ENCODE measurements at regions of chr2 and their contacts with region 1.

Region 1: DNA sequence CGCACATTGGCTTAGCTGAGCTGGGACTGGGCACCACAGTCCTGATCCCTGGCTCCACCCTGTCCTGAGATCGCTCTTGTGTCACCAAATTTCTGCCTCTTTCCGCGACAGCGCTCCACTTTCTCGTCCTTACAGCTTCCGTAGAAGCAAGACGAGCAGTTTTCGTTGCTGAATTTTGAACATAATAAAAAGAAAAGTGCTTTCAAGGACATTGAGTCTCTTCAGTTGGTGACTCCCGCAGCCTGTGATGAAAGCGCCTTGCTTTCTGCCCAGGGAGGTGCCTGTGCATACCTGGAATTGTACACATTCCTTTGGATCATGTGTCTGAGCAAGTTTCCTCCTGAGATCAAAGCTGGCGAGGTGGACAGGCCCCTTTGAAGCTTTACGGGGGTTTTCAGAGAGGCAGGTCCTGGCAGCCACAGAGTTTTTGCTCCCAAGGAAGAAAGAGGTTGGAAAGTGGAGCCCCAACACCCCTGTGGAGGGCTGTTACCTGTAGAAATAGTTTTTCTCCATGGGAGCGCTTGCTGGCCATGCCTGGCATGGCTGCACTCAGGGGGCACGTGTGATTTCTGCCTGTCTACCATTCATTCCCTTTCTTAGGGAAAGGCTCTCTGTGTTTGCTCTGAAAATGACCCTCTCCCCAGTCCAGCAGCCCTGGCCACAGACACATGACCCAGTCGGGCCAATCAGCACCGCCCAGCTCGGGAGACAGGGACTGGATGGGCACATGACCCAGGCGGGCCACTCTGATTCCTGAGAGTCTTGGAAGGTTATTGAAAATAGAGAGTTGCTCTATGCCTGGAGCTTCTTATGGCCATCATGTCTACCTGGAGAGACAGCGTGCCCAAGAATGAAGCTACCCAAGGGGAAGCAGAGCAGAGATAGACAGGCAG is 115.6 kb upstream of the OTOS start:
- DNase-seq: peak; percentile 88 to 91
- H3K4me3 ChIP-seq: peak overlapping the region; percentile 41
- H3K4me3 Mint-ChIP-seq: peak overlapping the region; percentile 94
- H3K27ac Mint-ChIP-seq: peak overlapping the region; percentile 99
- H3K4me1 ChIP-seq: peaks cover 48% of the 10 kb centered on the region
- H3K4me1 Mint-ChIP-seq: peaks cover 7% of the 10 kb centered on the region
- H3K27me3 ChIP-seq: no peaks in the 10 kb centered on the region
- H3K27me3 Mint-ChIP-seq: no peaks in the 10 kb centered on the region
- CTCF ChIP-seq: no peak

Region 2: GRCh38 chr2:240160291-240161086 is 95.6 kb before region 1 on chr2:
- CTCF ChIA-PET with region 1: no interaction called
- POLR2A ChIA-PET with region 1: no interaction called
- intact Hi-C with region 1: no loop called
- DNase-seq: no peak
- H3K4me3 ChIP-seq: no peak overlapping the region
- H3K4me3 Mint-ChIP-seq: no peak overlapping the region
- H3K27ac Mint-ChIP-seq: no peak overlapping the region
- H3K4me1 ChIP-seq: no peaks in the 10 kb centered on the region
- H3K4me1 Mint-ChIP-seq: no peaks in the 10 kb centered on the region
- H3K27me3 ChIP-seq: no peaks in the 10 kb centered on the region
- H3K27me3 Mint-ChIP-seq: peaks cover 9% of the 10 kb centered on the region
- CTCF ChIP-seq: no peak

Region 3: GRCh38 chr2:240369801-240370585 is 113.9 kb after region 1 on chr2:
- CTCF ChIA-PET with region 1: no interaction called
- POLR2A ChIA-PET with region 1: interaction called, 3 read pairs
- intact Hi-C with region 1: loop called (anchors 1 kb)
- DNase-seq: peak; percentile 73 to 87
- H3K4me3 ChIP-seq: no peak overlapping the region
- H3K4me3 Mint-ChIP-seq: no peak overlapping the region
- H3K27ac Mint-ChIP-seq: peak overlapping the region; percentile 36
- H3K4me1 ChIP-seq: peaks cover 30% of the 10 kb centered on the region
- H3K4me1 Mint-ChIP-seq: no peaks in the 10 kb centered on the region
- H3K27me3 ChIP-seq: no peaks in the 10 kb centered on the region
- H3K27me3 Mint-ChIP-seq: no peaks in the 10 kb centered on the region
- CTCF ChIP-seq: no peak

Region 4: DNA sequence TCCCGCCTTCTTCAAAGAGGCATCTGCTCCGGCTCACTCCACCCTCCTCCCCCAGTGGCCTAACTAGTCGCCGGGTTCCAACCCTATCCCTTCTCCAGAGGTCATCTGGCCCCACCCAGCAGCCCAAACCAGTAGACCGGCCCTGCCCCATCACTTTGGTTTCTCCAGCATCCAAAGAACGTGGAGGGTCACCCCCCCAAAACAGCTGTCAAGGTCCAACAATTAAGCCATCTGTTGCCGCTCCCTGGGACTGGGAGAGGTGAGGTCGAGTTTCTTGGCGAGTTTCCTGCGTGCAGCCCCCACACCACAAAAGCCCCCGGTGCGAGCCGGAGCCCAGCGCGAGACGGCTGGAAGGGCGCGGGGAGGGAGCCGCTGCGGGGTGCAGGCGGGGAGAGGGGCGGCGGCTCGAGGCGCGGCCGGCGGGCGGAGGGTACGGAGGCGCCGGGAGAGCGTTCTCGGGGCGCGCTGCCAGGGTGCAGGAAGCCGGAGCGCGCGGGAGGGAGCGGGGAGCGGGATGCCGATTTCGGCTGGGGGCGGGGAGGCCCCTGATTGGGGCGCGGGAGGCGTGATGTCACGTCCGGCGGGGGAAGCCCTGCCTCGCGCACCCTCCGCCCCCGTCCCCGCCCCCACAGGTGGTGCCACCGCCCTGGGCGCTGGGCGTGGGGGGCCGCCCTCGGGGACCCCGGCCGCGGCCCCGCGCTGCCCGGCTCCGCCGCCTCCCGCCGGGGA is 178.8 kb after region 1 on chr2:
- CTCF ChIA-PET with region 1: interaction called, 7 read pairs
- POLR2A ChIA-PET with region 1: no interaction called
- intact Hi-C with region 1: loop called (anchors 5 kb)
- DNase-seq: peak; percentile 87 to 90
- H3K4me3 ChIP-seq: peak overlapping the region; percentile 64
- H3K4me3 Mint-ChIP-seq: peak overlapping the region; percentile 73
- H3K27ac Mint-ChIP-seq: no peak overlapping the region
- H3K4me1 ChIP-seq: peaks cover 9% of the 10 kb centered on the region; the same call in 1 of the 2 replicates
- H3K4me1 Mint-ChIP-seq: no peaks in the 10 kb centered on the region
- H3K27me3 ChIP-seq: no peaks in the 10 kb centered on the region
- H3K27me3 Mint-ChIP-seq: no peaks in the 10 kb centered on the region
- CTCF ChIP-seq: no peak

Measured in Caco-2 (cell line).